Activated naive CD4-positive, alpha-beta T cell treated with anti-CD3 and anti-CD28 coated beads for 36 hours (primary cell): ENCODE measurements at regions of chr7 and their contacts with region 1.

Region 1: DNA sequence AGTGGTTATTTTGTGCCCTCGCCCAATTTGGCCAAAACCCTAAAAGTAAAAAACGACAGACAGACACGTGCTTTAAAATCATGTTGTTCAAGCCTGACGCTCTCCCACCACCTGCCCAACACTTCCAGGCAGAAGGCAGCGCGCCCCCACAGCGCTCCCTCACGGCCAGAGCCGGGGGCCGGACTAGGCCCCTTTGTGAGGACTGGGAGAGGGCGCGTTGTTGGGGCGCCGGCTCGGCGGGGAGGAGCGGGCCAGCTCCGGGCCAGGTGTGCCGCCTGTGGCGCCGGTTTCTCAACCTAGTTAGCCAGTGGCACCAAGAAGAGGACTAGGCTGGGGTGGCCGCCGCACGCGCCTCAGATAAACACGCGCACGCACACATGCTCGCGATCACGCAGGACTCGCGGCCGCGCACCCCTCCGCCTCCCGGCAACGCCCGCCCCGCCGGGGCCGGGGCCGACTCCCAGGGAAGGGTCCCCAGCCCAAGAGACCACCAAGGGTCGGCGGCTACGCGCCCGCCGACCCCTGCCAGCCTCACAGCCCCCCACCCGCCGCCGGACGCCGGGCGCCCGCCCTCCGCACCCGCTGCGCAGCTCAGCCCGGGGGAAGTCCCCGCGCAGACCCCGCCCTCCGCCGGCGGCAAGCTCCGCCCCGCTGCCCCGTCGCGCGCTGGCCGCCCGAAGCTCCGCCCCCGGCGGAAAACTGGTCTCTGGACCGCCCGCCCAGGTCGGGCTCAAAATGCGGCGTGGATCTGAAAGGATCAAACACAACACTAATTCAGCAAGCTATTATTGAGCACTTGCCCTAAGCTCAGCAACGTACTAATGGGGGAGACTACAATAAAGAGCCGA is at the start of gene IMMP2L:
- DNase-seq: peak; percentile 89
- H3K4me3 Mint-ChIP-seq: peak within 1 kb of the TSS; percentile 89
- H3K27ac Mint-ChIP-seq: peak within 1 kb of the TSS; percentile 85
- H3K4me1 Mint-ChIP-seq: peaks cover 32% of the 10 kb centered on the region
- H3K27me3 Mint-ChIP-seq: no peaks in the 10 kb centered on the region
- total RNA-seq, gene IMMP2L: 24.4 to 26.6 TPM

Region 2: DNA sequence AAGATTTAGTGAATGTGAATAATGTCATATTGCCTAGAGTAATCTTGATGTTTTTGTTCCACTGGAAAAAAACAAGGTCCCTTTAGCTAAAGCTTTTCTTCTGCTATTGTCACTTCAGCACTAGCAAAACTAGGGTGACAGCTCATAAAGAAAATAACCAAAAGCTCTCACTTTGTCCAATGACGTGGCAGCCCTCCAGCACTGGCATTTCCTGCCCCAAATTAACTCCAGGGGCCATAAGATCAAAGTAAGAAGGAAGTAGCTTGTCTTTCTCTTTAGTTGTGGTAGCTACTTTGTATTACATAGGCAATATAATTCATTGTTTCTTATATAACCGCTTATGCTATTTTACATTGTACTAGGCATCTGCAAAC is 423.9 kb before region 1 on chr7:
- CTCF ChIA-PET with region 1: no interaction called
- intact Hi-C with region 1: loop called (anchors 1 kb)
- DNase-seq: peak; percentile 86
- H3K4me3 Mint-ChIP-seq: peak overlapping the region; percentile 62
- H3K27ac Mint-ChIP-seq: peak overlapping the region; percentile 92
- H3K4me1 Mint-ChIP-seq: peaks cover 32% of the 10 kb centered on the region
- H3K27me3 Mint-ChIP-seq: no peaks in the 10 kb centered on the region

Region 3: GRCh38 chr7:112206238-112207044 is 644.3 kb after region 1 on chr7 and contains the starts of genes DOCK4 and ZNF277:
- CTCF ChIA-PET with region 1: no interaction called
- intact Hi-C with region 1: loop called (anchors 5 kb)
- DNase-seq: peak; percentile 99
- H3K4me3 Mint-ChIP-seq: peak within 1 kb of the TSS; percentile 97
- H3K27ac Mint-ChIP-seq: peak within 1 kb of the TSS; percentile 71
- H3K4me1 Mint-ChIP-seq: peaks cover 35% of the 10 kb centered on the region
- H3K27me3 Mint-ChIP-seq: peaks cover 28% of the 10 kb centered on the region
- total RNA-seq, gene DOCK4: 0.43 to 0.62 TPM
- total RNA-seq, gene ZNF277: 27.0 to 28.2 TPM